ENCODE measurements at regions of chr11 and their contacts with region 1.

Region 1: DNA sequence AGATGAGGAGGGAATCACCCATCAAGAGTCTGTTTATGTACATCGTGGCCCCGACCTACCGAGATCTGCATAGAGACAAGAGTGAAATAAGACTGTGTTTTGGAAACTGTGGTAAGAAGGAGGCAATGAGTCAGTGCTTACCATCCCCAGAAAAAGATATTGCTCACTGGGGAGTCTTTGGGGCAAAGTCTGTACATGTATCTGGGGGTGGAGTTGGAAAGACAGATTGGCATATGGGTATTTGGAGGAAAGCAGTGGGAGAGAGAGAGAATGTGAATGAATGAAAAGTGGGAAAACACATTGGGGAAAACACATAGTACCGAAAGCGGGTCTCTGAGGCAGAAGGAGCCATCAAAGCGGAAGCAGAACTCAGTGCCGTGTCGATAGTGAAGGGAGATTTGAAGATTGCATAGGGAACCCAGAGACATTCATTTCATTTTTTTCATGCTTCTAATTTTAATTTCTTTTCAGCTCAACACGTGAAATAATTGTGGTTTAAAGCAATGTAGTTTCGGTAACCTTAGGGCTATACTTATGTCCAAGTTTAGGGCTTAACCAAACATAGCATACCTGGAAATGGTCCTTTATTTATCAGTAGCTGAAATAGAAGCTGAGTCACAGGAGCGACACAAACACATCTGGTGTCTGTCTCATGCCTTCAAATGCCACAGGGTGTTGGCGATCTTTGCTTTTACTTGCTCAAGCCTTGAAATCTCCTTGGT is 98.6 kb upstream of the CD44 start:
- DNase-seq: peak; percentile 84
- ATAC-seq: peak; percentile 88
- H3K4me3 ChIP-seq: peak overlapping the region; percentile 6; the same call in 1 of the 2 replicates
- H3K27ac ChIP-seq: peak overlapping the region; percentile 71
- H3K4me1 ChIP-seq: peaks cover 31% of the 10 kb centered on the region
- H3K27me3 ChIP-seq: no peaks in the 10 kb centered on the region
- CTCF ChIP-seq: no peak
- EP300 ChIP-seq: peak; percentile 63 to 93; a peak in 3 of 4 replicates
- POLR2A ChIP-seq: no peak
- RAD21 ChIP-seq: peak; percentile 6; the same call in 1 of the 2 replicates

Region 2: DNA sequence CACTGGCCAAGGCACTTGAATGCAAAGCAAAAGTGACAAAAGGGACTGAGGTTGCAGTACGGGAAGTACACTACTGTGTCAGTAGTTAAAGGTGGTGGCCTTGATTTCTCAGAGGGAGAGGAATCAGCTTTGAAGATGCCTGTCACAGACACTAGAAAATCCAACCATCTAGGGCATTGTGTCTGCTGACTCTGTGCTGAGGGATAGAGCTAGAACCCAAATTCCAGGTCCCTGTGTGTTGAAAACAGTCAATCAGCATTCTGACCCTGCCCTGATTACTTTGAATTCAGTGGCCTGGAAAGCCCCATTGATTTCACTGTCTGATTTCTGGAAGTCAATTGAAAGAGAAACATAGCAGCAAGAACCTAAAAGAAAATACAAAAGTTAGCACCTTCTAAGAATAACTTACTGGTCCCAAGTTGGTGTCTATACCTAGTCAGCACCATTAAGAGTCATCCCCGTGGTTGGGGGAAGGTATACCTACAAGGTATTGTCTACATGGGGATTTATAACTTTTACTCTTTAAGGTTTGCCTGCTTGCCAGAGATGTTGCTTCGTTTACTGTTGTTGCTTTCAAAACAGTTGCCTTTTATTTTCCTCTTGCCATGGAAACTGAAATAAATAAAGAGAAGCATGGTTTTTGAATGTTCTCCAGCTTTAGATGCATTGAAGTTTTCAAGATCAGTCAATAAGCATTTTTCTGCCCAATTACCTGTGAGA is 26.7 kb before region 1 on chr11:
- CTCF ChIA-PET with region 1: no interaction called
- POLR2A ChIA-PET with region 1: interaction called, 5 read pairs
- RAD21 ChIA-PET with region 1: interaction called, 26 read pairs
- SMC1A ChIA-PET with region 1: interaction called, 33 read pairs
- in situ Hi-C with region 1: no loop called
- intact Hi-C with region 1: loop called (anchors 1 kb)
- DNase-seq: no peak
- ATAC-seq: peak; percentile 73
- H3K4me3 ChIP-seq: peak overlapping the region; percentile 11; the same call in 1 of the 2 replicates
- H3K27ac ChIP-seq: peak overlapping the region; percentile 73
- H3K4me1 ChIP-seq: peaks cover 22% of the 10 kb centered on the region
- H3K27me3 ChIP-seq: no peaks in the 10 kb centered on the region
- CTCF ChIP-seq: no peak
- EP300 ChIP-seq: peak; percentile 58 to 63; a peak in 3 of 4 replicates
- POLR2A ChIP-seq: no peak
- RAD21 ChIP-seq: 0 out of 2 replicates have a peak, but pooled peaks have one; percentile 10

Region 3: GRCh38 chr11:35058669-35059434 is 18.5 kb after region 1 on chr11:
- CTCF ChIA-PET with region 1: interaction called, 5 read pairs
- POLR2A ChIA-PET with region 1: no interaction called
- RAD21 ChIA-PET with region 1: interaction called, 8 read pairs
- SMC1A ChIA-PET with region 1: interaction called, 14 read pairs
- in situ Hi-C with region 1: no loop called
- intact Hi-C with region 1: no loop called
- DNase-seq: no peak
- ATAC-seq: peak; percentile 32
- H3K4me3 ChIP-seq: no peak overlapping the region
- H3K27ac ChIP-seq: no peak overlapping the region; the same call in 1 of the 2 replicates
- H3K4me1 ChIP-seq: peaks cover 11% of the 10 kb centered on the region
- H3K27me3 ChIP-seq: no peaks in the 10 kb centered on the region
- CTCF ChIP-seq: no peak
- EP300 ChIP-seq: no peak
- POLR2A ChIP-seq: no peak
- RAD21 ChIP-seq: no peak

Region 4: DNA sequence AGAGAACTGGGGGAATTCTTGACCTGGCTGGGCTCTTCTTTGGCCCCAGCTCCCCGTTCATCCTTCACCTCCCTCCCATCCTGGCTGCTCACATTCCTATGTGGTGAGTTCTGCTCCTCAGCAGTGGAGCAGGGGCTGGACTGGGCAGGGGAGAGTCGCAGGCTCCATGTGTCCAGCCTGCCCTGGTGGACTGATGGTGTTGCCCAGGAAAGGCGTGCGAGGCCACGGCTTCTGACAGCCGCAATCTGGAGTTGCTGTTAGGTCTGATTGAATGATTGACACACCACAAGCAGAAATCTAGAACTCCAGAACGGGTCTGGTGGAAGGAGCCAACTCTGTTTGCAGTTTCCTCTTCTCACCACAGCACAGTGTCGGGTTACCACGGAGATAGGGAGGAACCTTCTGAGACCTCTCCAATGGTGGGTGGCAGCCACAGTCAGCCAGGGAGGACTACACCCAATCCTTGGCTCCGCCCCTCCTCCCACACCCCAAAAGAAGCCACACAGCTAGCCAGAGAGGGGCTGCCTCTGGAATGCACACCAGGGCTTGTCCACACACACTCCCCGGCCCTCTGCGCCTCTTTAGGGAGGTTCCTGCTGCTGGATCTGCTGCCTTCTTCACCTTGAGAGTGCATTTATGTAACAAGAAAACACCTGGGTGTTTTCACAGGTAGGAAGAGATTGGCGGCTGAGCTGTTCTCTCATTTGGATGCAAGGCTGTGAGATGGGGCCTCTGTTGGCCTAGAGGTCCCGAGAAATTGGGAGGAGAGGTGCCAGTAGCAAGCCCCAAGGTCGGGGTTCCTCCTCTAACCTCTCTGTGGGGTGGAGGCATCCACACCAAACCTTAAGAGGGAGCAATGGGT is 42.2 kb after region 1 on chr11:
- CTCF ChIA-PET with region 1: interaction called, 4 read pairs
- POLR2A ChIA-PET with region 1: no interaction called
- RAD21 ChIA-PET with region 1: interaction called, 5 read pairs
- SMC1A ChIA-PET with region 1: interaction called, 8 read pairs
- in situ Hi-C with region 1: no loop called
- intact Hi-C with region 1: loop called (anchors 1 kb)
- DNase-seq: peak; percentile 83
- ATAC-seq: peak; percentile 85
- H3K4me3 ChIP-seq: peak overlapping the region; percentile 42; the same call in 1 of the 2 replicates
- H3K27ac ChIP-seq: peak overlapping the region; percentile 75
- H3K4me1 ChIP-seq: peaks cover 48% of the 10 kb centered on the region
- H3K27me3 ChIP-seq: no peaks in the 10 kb centered on the region
- CTCF ChIP-seq: no peak; a peak in 1 of 6 replicates
- EP300 ChIP-seq: peak; percentile 48 to 49; a peak in 1 of 4 replicates
- POLR2A ChIP-seq: peak; percentile 71
- RAD21 ChIP-seq: no peak

Region 5: DNA sequence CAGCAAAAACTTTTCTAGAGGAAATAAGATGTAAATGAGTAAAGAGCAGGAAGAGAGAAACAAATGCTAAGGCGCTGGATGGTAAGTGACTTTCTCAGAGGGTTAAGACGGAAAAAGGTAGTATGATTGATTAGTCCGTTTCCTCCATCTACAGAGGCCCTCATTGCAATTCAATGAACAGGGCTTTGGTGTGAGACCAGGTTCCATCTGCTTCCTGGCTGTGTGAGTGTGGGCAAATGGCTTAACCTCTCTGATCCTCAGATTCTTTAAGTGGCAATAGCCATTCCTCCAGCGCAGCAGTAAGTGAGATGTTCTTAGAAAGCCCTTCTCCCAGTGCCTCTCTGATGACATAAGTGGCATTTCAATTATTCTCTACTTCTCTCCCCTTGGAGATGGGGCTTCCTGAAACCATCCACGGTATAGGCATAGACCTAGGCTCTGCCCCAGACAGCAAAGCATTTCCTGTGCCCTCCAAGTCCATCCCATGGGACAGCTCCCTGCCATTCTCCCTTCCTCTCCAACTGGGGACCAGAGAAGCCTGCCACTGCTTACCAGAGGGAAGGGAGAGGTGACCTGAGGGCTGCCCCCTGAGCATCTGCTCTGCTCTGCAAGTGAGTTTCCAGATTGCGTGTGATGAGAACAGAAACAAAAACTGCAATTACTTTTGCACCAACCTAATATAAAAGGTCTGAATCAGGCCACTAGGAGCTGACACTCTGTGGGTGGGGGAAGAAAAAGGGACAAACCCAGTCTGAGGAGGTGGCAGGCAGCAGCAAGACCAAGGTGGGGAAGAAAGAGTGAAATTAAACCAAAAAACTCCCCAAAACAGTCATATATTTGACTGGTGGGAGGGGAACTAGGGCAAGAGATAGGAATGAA is 85.9 kb after region 1 on chr11:
- CTCF ChIA-PET with region 1: no interaction called
- POLR2A ChIA-PET with region 1: interaction called, 3 read pairs
- RAD21 ChIA-PET with region 1: interaction called, 9 read pairs
- SMC1A ChIA-PET with region 1: interaction called, 6 read pairs
- in situ Hi-C with region 1: no loop called
- intact Hi-C with region 1: loop called (anchors 1 kb)
- DNase-seq: peak; percentile 88
- ATAC-seq: peak; percentile 84
- H3K4me3 ChIP-seq: peak overlapping the region; percentile 0; the same call in 1 of the 2 replicates
- H3K27ac ChIP-seq: peak overlapping the region; percentile 77
- H3K4me1 ChIP-seq: peaks cover 60% of the 10 kb centered on the region
- H3K27me3 ChIP-seq: no peaks in the 10 kb centered on the region
- CTCF ChIP-seq: peak; percentile 10 to 36 (median 14); a peak in 3 of 6 replicates
- EP300 ChIP-seq: peak; percentile 71 to 87
- POLR2A ChIP-seq: peak; percentile 63
- RAD21 ChIP-seq: peak; percentile 54

Region 6: GRCh38 chr11:35144136-35144741 is 103.9 kb after region 1 on chr11:
- CTCF ChIA-PET with region 1: interaction called, 6 read pairs
- POLR2A ChIA-PET with region 1: interaction called, 4 read pairs
- RAD21 ChIA-PET with region 1: interaction called, 8 read pairs
- SMC1A ChIA-PET with region 1: interaction called, 10 read pairs
- in situ Hi-C with region 1: no loop called
- intact Hi-C with region 1: loop called (anchors 1 kb)
- DNase-seq: peak; percentile 85
- ATAC-seq: peak; percentile 67
- H3K4me3 ChIP-seq: peak overlapping the region; percentile 56
- H3K27ac ChIP-seq: peak overlapping the region; percentile 54
- H3K4me1 ChIP-seq: peaks cover 55% of the 10 kb centered on the region
- H3K27me3 ChIP-seq: no peaks in the 10 kb centered on the region
- CTCF ChIP-seq: peak in 2 of 3 experiments; percentile 18 to 22; a peak in 2 of 6 replicates
- EP300 ChIP-seq: peak; percentile 64 to 77; a peak in 3 of 4 replicates
- POLR2A ChIP-seq: 0 out of 2 replicates have a peak, but pooled peaks have one; percentile 52
- RAD21 ChIP-seq: peak; percentile 41; the same call in 1 of the 2 replicates

Region 7: GRCh38 chr11:35214792-35215193 is 174.4 kb after region 1 on chr11:
- CTCF ChIA-PET with region 1: no interaction called
- POLR2A ChIA-PET with region 1: no interaction called
- RAD21 ChIA-PET with region 1: no interaction called
- SMC1A ChIA-PET with region 1: no interaction called
- in situ Hi-C with region 1: no loop called
- intact Hi-C with region 1: no loop called
- DNase-seq: no peak
- ATAC-seq: no peak
- H3K4me3 ChIP-seq: no peak overlapping the region
- H3K27ac ChIP-seq: no peak overlapping the region
- H3K4me1 ChIP-seq: no peaks in the 10 kb centered on the region
- H3K27me3 ChIP-seq: no peaks in the 10 kb centered on the region
- CTCF ChIP-seq: no peak
- EP300 ChIP-seq: no peak
- POLR2A ChIP-seq: no peak
- RAD21 ChIP-seq: no peak